AG04450 (cell line): ENCODE measurements at regions of chr22 and their contacts with region 1.

Region 1: DNA sequence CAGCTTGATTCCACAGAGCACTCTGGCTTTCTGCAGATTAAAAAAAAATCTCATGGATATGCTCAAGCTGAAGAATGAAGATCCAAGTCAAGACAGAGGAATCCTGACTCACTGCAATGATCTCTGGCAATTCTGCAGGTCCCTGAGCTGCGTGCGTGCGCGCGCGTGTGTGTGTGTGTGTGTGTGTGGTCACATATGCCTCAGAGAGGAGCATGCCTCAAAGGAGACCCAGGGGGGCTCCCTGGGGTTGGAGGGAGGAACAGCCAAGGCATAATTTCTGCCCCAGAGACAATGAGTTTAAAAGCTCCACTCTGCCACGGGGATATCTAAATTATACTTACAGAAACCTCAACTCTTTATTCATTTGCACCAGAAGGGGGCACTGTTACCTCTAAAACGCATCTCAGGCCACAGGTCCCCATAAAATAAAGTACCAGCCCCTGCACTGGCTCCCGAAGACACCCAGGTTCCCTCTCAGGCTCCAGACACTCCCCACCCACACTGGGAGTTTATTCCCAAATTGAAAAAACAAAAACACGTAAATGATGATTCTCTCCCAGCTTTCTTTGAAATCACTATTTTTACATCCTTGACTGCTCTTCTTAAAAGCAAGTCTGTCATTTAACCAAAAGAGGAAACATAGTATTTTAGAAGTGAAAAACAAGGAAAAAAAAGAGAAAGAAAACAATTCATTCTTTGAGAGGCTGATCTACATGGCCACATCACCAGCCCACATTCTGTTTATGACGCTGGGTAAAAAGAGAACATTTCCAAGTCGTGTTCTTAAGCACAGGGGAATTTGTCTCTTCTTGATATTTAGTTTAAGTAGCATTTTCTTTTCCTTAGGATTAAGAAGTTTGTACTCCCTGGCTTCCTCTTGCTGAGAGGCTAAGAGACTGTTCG is 401.0 kb downstream of the LARGE1 start:
- DNase-seq: no peak
- H3K4me3 ChIP-seq: no peak overlapping the region
- H3K27ac ChIP-seq: no peak overlapping the region
- H3K27me3 ChIP-seq: no peaks in the 10 kb centered on the region
- CTCF ChIP-seq: peak; percentile 65

Region 2: GRCh38 chr22:33209930-33210784 is 309.2 kb before region 1 on chr22:
- CTCF ChIA-PET with region 1: no interaction called
- POLR2A ChIA-PET with region 1: no interaction called
- DNase-seq: no peak
- H3K4me3 ChIP-seq: no peak overlapping the region
- H3K27ac ChIP-seq: no peak overlapping the region
- H3K27me3 ChIP-seq: no peaks in the 10 kb centered on the region
- CTCF ChIP-seq: peak; percentile 56

Region 3: DNA sequence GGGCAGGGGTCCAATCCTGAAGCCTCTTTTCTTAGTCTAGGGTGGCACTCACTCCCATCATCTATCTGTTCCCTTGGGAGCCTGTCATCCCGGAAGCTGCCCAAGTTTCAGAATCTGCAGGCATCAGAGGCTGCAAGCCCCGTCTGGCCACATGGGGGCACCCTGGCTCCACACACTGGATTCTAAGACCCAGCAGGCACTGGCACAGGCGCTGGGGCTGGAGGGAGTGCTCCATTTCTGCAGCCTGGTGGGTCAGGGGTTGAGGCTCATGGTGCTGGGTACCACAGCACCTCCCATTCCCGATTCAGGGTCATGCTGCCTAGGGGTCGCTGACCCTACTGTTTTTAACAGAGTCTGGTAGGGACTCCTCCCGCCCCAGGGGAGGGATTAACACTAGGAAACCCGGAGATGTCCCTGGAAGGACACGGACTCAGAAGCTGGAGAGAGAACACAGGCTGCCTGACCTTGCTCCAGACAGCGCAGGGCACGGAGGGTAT is 217.2 kb before region 1 on chr22:
- CTCF ChIA-PET with region 1: interaction called, 23 read pairs
- POLR2A ChIA-PET with region 1: no interaction called
- DNase-seq: peak; percentile 39
- H3K4me3 ChIP-seq: no peak overlapping the region
- H3K27ac ChIP-seq: no peak overlapping the region
- H3K27me3 ChIP-seq: no peaks in the 10 kb centered on the region
- CTCF ChIP-seq: peak; percentile 99

Region 4: GRCh38 chr22:33332538-33332937 is 186.8 kb before region 1 on chr22:
- CTCF ChIA-PET with region 1: no interaction called
- POLR2A ChIA-PET with region 1: no interaction called
- DNase-seq: no peak
- H3K4me3 ChIP-seq: no peak overlapping the region
- H3K27ac ChIP-seq: no peak overlapping the region
- H3K27me3 ChIP-seq: no peaks in the 10 kb centered on the region
- CTCF ChIP-seq: no peak

Region 5: GRCh38 chr22:33504941-33505625 is 14.2 kb before region 1 on chr22:
- CTCF ChIA-PET with region 1: interaction called, 19 read pairs
- POLR2A ChIA-PET with region 1: no interaction called
- DNase-seq: no peak
- H3K4me3 ChIP-seq: no peak overlapping the region
- H3K27ac ChIP-seq: peak overlapping the region; percentile 21
- H3K27me3 ChIP-seq: no peaks in the 10 kb centered on the region
- CTCF ChIP-seq: no peak

Region 6: DNA sequence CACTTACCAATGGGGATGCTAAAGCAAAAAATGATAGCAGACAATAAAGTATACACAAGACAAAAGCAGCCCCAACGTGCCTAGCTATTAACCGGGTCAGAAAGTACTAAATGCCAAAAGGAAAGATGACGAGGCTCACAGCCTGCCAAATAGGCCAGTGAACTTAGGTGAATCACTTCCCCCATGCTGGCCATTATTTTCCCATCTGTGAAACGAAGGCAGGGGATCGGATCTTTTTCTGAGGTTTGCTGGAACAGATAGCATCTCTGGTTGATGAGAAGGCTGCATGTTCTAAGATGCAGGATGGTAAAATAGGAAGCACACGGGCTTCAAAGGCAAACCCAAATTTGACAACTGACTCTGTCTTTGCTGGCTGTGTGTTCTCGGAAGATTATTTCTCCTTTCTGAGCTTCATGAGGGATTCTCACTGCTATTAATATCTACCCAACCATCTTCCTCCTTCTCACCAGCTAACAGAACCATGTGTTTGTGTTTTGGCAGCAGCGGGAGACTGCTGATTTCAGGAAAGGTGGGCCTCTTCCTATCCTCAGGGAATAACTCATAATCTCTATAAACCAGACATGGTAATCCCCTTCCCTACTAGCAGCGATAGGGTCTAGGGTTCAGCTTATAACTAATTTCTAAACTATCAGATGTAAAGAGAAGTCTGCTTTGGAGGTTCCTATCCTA is 10.2 kb after region 1 on chr22:
- CTCF ChIA-PET with region 1: interaction called, 14 read pairs
- POLR2A ChIA-PET with region 1: no interaction called
- DNase-seq: no peak
- H3K4me3 ChIP-seq: no peak overlapping the region
- H3K27ac ChIP-seq: no peak overlapping the region
- H3K27me3 ChIP-seq: no peaks in the 10 kb centered on the region
- CTCF ChIP-seq: no peak

Region 7: DNA sequence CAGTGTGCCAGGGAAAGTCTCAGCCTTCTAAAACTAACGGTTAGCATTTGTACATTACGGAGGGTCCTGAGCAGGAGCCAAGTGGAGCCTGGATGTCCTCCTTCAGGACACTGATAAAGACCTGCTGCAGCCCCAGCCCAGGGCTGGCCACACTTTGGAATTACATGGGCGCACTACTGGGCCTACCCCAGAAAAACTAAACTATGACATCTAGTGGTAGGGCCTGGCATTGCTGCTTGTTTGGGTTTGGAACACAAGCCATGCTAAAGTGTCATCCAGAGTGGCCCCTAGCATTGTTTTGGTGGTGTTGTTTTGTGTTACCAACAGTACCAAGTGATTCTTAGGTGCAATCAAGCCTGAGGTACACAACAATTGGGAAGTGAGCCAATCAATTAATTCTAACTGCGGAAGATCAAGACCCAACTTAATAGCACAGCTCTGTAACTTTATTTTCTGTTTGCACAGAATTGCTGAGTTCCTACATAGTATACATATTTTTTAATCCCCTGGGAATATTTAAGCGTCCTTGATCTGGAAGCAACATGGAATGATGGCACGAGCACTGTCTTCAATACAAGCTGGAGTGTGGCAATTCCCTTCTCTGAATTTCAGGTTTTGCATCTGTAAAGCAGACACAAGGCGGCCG is 60.2 kb after region 1 on chr22:
- CTCF ChIA-PET with region 1: interaction called, 10 read pairs
- POLR2A ChIA-PET with region 1: no interaction called
- DNase-seq: no peak
- H3K4me3 ChIP-seq: no peak overlapping the region
- H3K27ac ChIP-seq: no peak overlapping the region
- H3K27me3 ChIP-seq: no peaks in the 10 kb centered on the region
- CTCF ChIP-seq: peak; percentile 92

Region 8: GRCh38 chr22:33923660-33924246 is 404.4 kb after region 1 on chr22:
- CTCF ChIA-PET with region 1: interaction called, 48 read pairs
- POLR2A ChIA-PET with region 1: interaction called, 4 read pairs
- DNase-seq: peak; percentile 23
- H3K4me3 ChIP-seq: no peak overlapping the region
- H3K27ac ChIP-seq: no peak overlapping the region
- H3K27me3 ChIP-seq: peaks cover 6% of the 10 kb centered on the region
- CTCF ChIP-seq: peak; percentile 86